HepG2 (cell line): ENCODE measurements at regions of chr5 and their contacts with region 1.

Region 1: DNA sequence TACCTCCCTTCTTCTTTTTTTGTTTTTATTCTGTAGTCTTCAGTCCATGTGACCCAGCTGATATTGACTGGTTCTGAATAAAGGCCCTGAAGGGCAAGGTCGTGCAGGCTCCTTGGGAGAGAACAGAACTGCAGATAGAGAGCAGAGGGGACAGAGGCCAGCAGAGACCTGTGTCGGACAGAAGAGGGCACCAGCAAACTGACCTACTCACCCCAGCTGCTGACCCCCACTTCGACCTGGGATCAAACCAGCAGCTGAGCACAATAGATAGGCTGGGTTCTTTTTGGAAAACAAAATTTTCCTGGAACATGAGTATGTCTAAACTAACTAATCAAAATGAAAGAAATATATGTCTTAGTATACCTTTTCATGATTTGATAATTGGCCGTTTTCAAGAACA is 695.1 kb downstream of the NR2F1-AS1 start:
- DNase-seq: peak; percentile 53
- ATAC-seq: peak; percentile 90
- H3K4me3 ChIP-seq: no peak overlapping the region
- H3K27ac ChIP-seq: no peak overlapping the region
- H3K4me1 ChIP-seq: peaks cover 48% of the 10 kb centered on the region
- H3K27me3 ChIP-seq: no peaks in the 10 kb centered on the region
- CTCF ChIP-seq: peak; percentile 88
- EP300 ChIP-seq: no peak
- POLR2A ChIP-seq: no peak
- RAD21 ChIP-seq: peak; percentile 85

Region 2: DNA sequence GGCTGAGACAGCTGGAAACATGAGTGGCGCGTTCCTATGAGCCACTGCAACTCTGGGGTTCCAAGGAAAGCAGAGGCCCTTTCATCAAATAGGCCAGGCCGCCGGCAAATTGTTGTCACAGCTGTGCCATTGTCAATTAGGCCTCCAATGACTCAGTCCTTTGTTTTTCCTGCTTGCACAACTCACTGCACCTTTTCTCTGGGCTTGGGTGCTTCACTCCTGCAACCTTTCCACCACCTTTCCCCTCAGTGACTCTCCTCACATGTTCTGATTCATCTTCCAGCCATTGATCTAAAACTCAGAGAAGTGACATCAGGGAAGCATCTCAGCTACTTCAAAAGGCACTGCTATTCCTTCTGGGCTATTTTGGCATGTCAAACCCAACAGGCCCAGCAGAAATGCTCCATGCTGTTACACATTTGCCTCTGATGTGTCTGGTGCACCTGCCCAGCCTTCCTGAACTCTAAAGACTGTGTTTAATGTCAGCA is 41.4 kb after region 1 on chr5:
- CTCF ChIA-PET with region 1: no interaction called
- POLR2A ChIA-PET with region 1: interaction called, 3 read pairs
- in situ Hi-C with region 1: no loop called
- intact Hi-C with region 1: loop called (anchors 1 kb)
- DNase-seq: peak; percentile 96
- ATAC-seq: peak; percentile 94
- H3K4me3 ChIP-seq: no peak overlapping the region
- H3K27ac ChIP-seq: peak overlapping the region; percentile 76
- H3K4me1 ChIP-seq: peaks cover 79% of the 10 kb centered on the region
- H3K27me3 ChIP-seq: no peaks in the 10 kb centered on the region
- CTCF ChIP-seq: no peak
- EP300 ChIP-seq: peak; percentile 90 to 96
- POLR2A ChIP-seq: no peak
- RAD21 ChIP-seq: no peak; the same call in 1 of the 2 replicates

Region 3: GRCh38 chr5:92969781-92970237 is 83.9 kb after region 1 on chr5:
- CTCF ChIA-PET with region 1: no interaction called
- POLR2A ChIA-PET with region 1: no interaction called
- in situ Hi-C with region 1: no loop called
- intact Hi-C with region 1: loop called (anchors 2 kb)
- DNase-seq: peak; percentile 98
- ATAC-seq: peak; percentile 99
- H3K4me3 ChIP-seq: no peak overlapping the region
- H3K27ac ChIP-seq: peak overlapping the region; percentile 87
- H3K4me1 ChIP-seq: peaks cover 59% of the 10 kb centered on the region
- H3K27me3 ChIP-seq: no peaks in the 10 kb centered on the region
- CTCF ChIP-seq: no peak
- EP300 ChIP-seq: peak; percentile 74 to 99
- POLR2A ChIP-seq: 0 out of 4 replicates have a peak, but pooled peaks of 1 of the 2 experiments have one; percentile 22
- RAD21 ChIP-seq: no peak

Region 4: GRCh38 chr5:93189707-93190120 is 303.8 kb after region 1 on chr5:
- CTCF ChIA-PET with region 1: no interaction called
- POLR2A ChIA-PET with region 1: no interaction called
- in situ Hi-C with region 1: no loop called
- intact Hi-C with region 1: loop called (anchors 5 kb)
- DNase-seq: peak; percentile 76
- ATAC-seq: peak; percentile 62; the same call in 2 of the 3 replicates
- H3K4me3 ChIP-seq: no peak overlapping the region
- H3K27ac ChIP-seq: no peak overlapping the region
- H3K4me1 ChIP-seq: peaks cover 48% of the 10 kb centered on the region
- H3K27me3 ChIP-seq: no peaks in the 10 kb centered on the region
- CTCF ChIP-seq: no peak
- EP300 ChIP-seq: peak in 1 of 2 experiments; percentile 46; a peak in 1 of 4 replicates
- POLR2A ChIP-seq: no peak
- RAD21 ChIP-seq: no peak

Region 5: DNA sequence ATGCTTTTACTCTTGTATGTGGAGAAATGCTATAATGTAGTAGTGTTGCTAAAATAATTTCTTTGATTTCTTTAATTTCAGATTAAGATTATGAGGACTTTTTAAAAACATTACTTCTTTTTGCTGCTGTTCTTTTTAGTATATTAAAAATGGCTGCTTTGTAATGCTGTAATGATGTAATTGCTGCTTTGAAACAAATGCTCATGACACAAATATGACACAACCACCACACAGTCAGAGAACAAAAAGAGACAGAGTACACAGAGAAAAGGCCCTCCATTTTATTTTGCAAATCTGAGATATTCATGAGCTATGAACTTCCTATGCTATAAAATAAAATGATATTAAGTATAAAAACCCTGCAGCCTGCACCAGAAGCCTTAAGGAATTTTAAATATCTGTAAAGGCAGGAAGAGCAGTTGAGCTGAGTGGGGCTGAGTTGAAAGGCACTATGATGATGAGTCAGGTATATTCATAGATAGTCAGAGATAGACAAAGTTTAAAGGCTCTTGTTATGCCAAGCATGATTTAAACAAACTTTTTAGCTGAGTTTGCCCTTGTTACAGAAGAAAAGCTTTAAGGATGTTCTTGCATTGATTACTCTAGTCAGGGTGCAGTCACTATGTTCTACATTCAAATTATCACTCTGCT is 860.6 kb after region 1 on chr5:
- CTCF ChIA-PET with region 1: no interaction called
- POLR2A ChIA-PET with region 1: no interaction called
- in situ Hi-C with region 1: no loop called
- intact Hi-C with region 1: no loop called
- DNase-seq: no peak
- ATAC-seq: no peak
- H3K4me3 ChIP-seq: no peak overlapping the region
- H3K27ac ChIP-seq: no peak overlapping the region
- H3K4me1 ChIP-seq: peaks cover 6% of the 10 kb centered on the region
- H3K27me3 ChIP-seq: no peaks in the 10 kb centered on the region
- CTCF ChIP-seq: no peak
- EP300 ChIP-seq: no peak
- POLR2A ChIP-seq: no peak
- RAD21 ChIP-seq: no peak

Region 6: DNA sequence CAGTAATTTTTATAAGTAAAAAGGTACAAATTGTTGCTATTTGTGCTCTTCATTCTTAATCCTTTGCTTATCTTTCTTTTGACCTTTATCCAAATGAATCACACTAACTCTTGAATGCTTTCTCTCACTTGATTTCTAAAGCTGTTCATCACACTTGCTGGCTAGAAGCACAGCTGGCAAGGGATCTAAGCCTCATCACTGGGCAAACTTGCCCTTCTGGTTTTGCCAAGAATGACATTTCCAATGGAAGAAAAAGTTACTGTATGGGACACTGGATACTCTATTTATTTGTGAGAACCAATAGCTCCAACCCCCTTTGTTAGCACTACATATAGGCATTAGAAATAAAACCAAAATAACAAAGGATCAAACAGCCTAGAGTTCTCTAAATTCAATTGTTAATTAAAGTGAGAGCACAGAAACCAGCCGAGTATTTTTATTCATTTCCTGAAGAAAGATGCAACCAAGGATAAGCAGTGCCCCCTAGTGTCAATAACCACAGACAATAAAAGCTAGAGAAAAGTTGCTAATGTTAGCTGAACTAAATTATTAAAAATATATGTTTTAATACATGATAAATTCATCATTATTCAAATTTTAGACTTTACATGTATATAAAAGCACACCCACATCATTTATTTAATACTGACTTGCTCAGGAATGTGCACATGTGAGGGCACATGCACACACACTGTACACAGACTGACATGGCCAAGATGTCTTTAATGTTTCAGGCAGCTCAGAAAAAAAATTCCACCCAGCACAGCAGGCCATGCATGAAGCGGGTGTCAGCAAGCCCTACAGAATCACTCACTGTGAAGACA is 915.2 kb after region 1 on chr5:
- CTCF ChIA-PET with region 1: no interaction called
- POLR2A ChIA-PET with region 1: no interaction called
- in situ Hi-C with region 1: no loop called
- intact Hi-C with region 1: loop called (anchors 10 kb)
- DNase-seq: peak; percentile 45
- ATAC-seq: peak; percentile 54
- H3K4me3 ChIP-seq: no peak overlapping the region
- H3K27ac ChIP-seq: no peak overlapping the region
- H3K4me1 ChIP-seq: peaks cover 5% of the 10 kb centered on the region
- H3K27me3 ChIP-seq: no peaks in the 10 kb centered on the region
- CTCF ChIP-seq: peak; percentile 61
- EP300 ChIP-seq: no peak
- POLR2A ChIP-seq: no peak
- RAD21 ChIP-seq: peak; percentile 37; the same call in 1 of the 2 replicates